Mammary epithelial cell (primary cell): ENCODE measurements at regions of chr9 and their contacts with region 1.

Region 1: GRCh38 chr9:24479361-24480059 is 66.2 kb downstream of the IZUMO3 start:
- DNase-seq: no peak
- H3K4me3 ChIP-seq: no peak overlapping the region
- H3K27ac ChIP-seq: no peak overlapping the region
- H3K4me1 ChIP-seq: no peaks in the 10 kb centered on the region
- H3K27me3 ChIP-seq: no peaks in the 10 kb centered on the region
- CTCF ChIP-seq: no peak

Region 2: GRCh38 chr9:24413651-24414050 is 65.9 kb before region 1 on chr9:
- CTCF ChIA-PET with region 1: no interaction called
- dilution Hi-C with region 1: no loop called
- in situ Hi-C with region 1: no loop called
- intact Hi-C with region 1: loop called (anchors 10 kb)
- DNase-seq: peak; percentile 41
- H3K4me3 ChIP-seq: no peak overlapping the region
- H3K27ac ChIP-seq: no peak overlapping the region
- H3K4me1 ChIP-seq: no peaks in the 10 kb centered on the region
- H3K27me3 ChIP-seq: no peaks in the 10 kb centered on the region
- CTCF ChIP-seq: no peak